MCF 10A (cell line): ENCODE measurements at regions of chr1 and their contacts with region 1.

Region 1: DNA sequence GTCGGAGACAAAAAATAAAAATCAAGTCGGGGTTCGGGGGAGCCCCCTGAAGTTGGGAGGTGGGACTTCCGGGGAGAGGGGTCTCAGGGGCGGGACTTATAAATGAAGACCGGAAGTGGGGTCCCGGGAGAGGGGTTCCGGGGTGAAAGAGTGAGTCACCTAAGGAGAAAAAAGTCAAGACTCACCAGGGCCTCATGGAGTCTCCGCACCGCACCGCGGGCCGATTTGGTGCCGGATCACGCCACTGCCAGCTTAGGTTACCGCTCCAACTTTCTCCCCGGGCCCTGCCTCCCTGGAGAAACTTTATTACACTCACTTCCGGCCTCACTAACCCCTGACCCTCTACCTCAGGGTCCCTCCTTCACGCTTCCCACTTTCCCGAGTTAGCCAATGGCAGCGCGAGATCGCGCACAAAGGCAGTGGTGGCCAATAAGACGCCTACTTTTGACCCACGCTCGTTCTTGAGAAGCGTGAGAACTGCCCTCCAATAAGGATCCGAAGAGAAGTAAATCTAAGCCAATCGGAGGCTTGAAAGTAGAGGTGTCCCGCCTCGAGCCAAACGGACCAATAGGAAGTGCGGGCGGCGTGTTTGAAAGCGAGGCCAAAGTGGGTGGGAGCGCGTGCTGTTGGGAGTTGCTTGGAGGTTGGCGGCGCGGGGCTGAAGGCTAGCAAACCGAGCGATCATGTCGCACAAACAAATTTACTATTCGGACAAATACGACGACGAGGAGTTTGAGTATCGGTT is at the start of gene CKS1B:
- DNase-seq: peak; percentile 100
- H3K4me3 Mint-ChIP-seq: no peak within 1 kb of the TSS
- H3K27ac Mint-ChIP-seq: no peak within 1 kb of the TSS
- H3K4me1 Mint-ChIP-seq: peaks cover 32% of the 10 kb centered on the region
- H3K27me3 Mint-ChIP-seq: no peaks in the 10 kb centered on the region
- CTCF ChIP-seq: no peak
- total RNA-seq, gene CKS1B: 285 and 289 TPM in 2 replicates

Region 2: GRCh38 chr1:154961497-154962262 is 12.6 kb before region 1 on chr1 and contains the start of gene PYGO2:
- CTCF ChIA-PET with region 1: interaction called, 34 read pairs
- POLR2A ChIA-PET with region 1: interaction called, 1,917 read pairs
- intact Hi-C with region 1: loop called (anchors 1 kb)
- DNase-seq: peak; percentile 85
- H3K4me3 Mint-ChIP-seq: peak within 1 kb of the TSS; percentile 73
- H3K27ac Mint-ChIP-seq: peak within 1 kb of the TSS; percentile 33
- H3K4me1 Mint-ChIP-seq: peaks cover 39% of the 10 kb centered on the region
- H3K27me3 Mint-ChIP-seq: no peaks in the 10 kb centered on the region
- CTCF ChIP-seq: peak; percentile 81
- total RNA-seq, gene PYGO2: 32.1 and 35.9 TPM in 2 replicates

Region 3: GRCh38 chr1:155001675-155002463 is 27.6 kb after region 1 on chr1:
- CTCF ChIA-PET with region 1: interaction called, 64 read pairs
- POLR2A ChIA-PET with region 1: interaction called, 1,917 read pairs
- intact Hi-C with region 1: loop called (anchors 1 kb)
- DNase-seq: peak; percentile 100
- H3K4me3 Mint-ChIP-seq: peak overlapping the region; percentile 90
- H3K27ac Mint-ChIP-seq: peak overlapping the region; percentile 97
- H3K4me1 Mint-ChIP-seq: peaks cover 52% of the 10 kb centered on the region
- H3K27me3 Mint-ChIP-seq: no peaks in the 10 kb centered on the region
- CTCF ChIP-seq: peak; percentile 34

Region 4: DNA sequence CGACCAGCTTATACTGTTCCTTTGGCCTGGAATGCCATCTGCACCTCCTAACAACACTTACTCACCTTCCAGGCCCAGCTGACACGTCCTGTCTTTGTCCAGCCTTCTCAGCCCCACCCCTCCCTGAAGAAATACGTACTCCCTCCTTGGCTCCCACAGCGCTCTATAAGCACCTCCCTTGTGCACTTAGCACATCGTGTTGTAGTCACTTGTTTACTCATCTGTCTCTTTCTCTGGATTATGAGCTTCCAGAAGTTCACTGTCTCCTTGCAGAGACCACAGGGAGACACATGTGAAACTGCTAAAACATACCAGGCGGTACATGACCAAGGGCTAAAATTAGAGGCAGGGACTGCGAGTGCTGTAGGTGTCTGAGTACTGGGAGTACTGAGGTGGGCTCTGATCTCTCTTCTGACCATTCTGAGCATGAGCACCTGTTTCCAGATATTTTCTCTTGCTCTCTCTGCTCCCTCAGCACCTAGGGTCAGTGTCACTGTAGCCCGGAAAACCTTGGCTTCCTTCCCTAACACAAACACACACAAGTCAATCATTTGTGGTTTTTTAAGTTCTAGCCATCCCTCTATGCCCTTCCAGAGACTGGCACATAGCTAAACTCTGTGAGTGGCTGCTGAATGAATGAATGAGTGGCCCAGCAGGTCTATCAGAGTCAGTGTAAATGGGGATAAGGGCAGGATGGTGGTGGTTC is 64.5 kb after region 1 on chr1:
- CTCF ChIA-PET with region 1: interaction called, 4 read pairs
- POLR2A ChIA-PET with region 1: interaction called, 121 read pairs
- intact Hi-C with region 1: no loop called
- DNase-seq: peak; percentile 97
- H3K4me3 Mint-ChIP-seq: peak overlapping the region; percentile 15
- H3K27ac Mint-ChIP-seq: peak overlapping the region; percentile 79
- H3K4me1 Mint-ChIP-seq: peaks cover 37% of the 10 kb centered on the region
- H3K27me3 Mint-ChIP-seq: no peaks in the 10 kb centered on the region
- CTCF ChIP-seq: no peak

Region 5: GRCh38 chr1:155063550-155064110 is 89.4 kb after region 1 on chr1 and contains the start of gene EFNA4:
- CTCF ChIA-PET with region 1: interaction called, 6 read pairs
- POLR2A ChIA-PET with region 1: interaction called, 76 read pairs
- intact Hi-C with region 1: no loop called
- DNase-seq: peak; percentile 96
- H3K4me3 Mint-ChIP-seq: peak within 1 kb of the TSS; percentile 81
- H3K27ac Mint-ChIP-seq: peak within 1 kb of the TSS; percentile 3
- H3K4me1 Mint-ChIP-seq: peaks cover 31% of the 10 kb centered on the region
- H3K27me3 Mint-ChIP-seq: no peaks in the 10 kb centered on the region
- CTCF ChIP-seq: no peak
- total RNA-seq, gene EFNA4: 7.4 and 9.5 TPM in 2 replicates

Region 6: DNA sequence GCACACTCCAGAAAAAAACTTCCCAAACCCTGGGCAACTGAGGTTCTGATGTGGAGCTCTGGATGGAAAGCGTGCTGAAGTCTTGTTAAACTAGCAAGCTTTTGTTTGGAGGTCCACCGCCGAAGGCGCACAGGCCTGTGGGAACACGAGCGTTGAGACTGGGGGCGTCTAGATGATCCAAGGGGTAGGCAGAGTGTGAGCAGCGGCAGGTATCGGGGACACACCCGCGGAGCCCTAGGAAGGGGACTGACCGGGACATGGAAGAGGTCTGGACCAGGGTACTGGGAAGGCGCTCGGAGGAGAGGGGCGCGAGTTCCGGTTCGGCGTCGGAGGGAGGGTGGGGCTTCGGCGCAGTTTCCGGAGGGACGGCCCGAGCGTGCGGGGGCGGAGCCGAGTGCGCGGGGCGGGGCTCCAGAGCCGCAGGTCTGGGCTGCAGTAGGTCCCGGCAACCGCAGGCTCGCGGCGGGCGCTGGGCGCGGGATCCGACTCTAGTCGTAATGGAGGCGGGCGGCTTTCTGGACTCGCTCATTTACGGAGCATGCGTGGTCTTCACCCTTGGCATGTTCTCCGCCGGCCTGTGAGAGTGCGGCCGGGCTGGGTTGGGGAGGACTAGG is 161.3 kb after region 1 on chr1 and contains the start of gene SLC50A1:
- CTCF ChIA-PET with region 1: interaction called, 3 read pairs
- POLR2A ChIA-PET with region 1: interaction called, 74 read pairs
- intact Hi-C with region 1: no loop called
- DNase-seq: peak; percentile 94
- H3K4me3 Mint-ChIP-seq: peak within 1 kb of the TSS; percentile 80
- H3K27ac Mint-ChIP-seq: peak within 1 kb of the TSS; percentile 94
- H3K4me1 Mint-ChIP-seq: peaks cover 50% of the 10 kb centered on the region
- H3K27me3 Mint-ChIP-seq: no peaks in the 10 kb centered on the region
- CTCF ChIP-seq: no peak
- total RNA-seq, gene SLC50A1: 91.2 and 97.8 TPM in 2 replicates